AG04450 (cell line): ENCODE measurements at regions of chr5 and their contacts with region 1.

Region 1: GRCh38 chr5:88690409-88691229 is 192.4 kb downstream of the MEF2C start:
- DNase-seq: peak; percentile 18
- H3K4me3 ChIP-seq: peak overlapping the region; percentile 22; the same call in 1 of the 2 replicates
- H3K27ac ChIP-seq: no peak overlapping the region
- H3K27me3 ChIP-seq: peaks cover 100% of the 10 kb centered on the region
- CTCF ChIP-seq: peak; percentile 99

Region 2: DNA sequence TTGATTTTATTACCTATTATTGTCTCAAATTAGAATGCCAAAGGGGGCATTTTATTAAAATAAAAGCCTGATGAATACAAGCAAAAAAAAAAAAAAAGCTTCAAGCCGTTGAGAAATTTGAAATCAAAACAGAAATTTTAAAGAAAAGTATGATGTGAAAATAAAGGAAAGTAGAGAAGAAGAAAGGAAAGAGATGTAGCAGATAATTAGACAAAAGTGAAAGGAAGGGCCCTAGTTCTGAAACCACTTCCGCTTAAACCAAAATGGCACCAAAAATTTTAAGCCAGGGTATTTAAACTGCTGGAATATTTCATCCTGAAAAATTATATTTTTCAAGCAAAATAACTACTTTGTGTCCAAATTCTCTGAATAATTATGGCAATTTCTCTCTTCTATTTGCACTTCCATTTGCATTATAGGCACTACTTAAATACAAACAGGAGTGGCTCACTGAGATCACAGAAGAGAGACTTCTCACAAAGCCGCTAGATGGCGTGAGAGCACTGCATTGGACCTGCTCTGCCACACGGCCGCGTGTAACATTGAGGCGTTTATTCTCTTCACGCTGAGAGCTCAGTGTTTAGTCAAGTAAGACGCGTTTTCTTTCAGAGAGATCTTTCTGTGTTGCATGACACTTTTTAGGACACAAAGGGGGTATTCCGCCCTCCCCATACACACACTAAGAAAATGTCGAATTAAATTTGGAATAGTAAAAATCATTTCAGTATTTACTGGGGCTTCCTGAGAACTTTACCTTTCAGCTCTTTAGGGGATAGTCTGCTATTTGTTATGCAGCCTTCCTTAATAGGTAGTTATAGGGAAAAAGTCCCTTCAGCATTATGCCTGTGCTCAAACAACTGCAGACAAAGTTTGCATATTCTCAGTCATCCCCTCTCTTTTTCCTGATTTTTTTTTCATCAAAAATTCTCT is 909.5 kb before region 1 on chr5:
- CTCF ChIA-PET with region 1: interaction called, 141 read pairs
- POLR2A ChIA-PET with region 1: no interaction called
- DNase-seq: peak; percentile 61
- H3K4me3 ChIP-seq: no peak overlapping the region
- H3K27ac ChIP-seq: no peak overlapping the region
- H3K27me3 ChIP-seq: no peaks in the 10 kb centered on the region
- CTCF ChIP-seq: peak; percentile 97

Region 3: GRCh38 chr5:88666761-88667495 is 23.7 kb before region 1 on chr5:
- CTCF ChIA-PET with region 1: interaction called, 12 read pairs
- POLR2A ChIA-PET with region 1: no interaction called
- DNase-seq: no peak
- H3K4me3 ChIP-seq: peak overlapping the region; percentile 53
- H3K27ac ChIP-seq: no peak overlapping the region
- H3K27me3 ChIP-seq: peaks cover 70% of the 10 kb centered on the region
- CTCF ChIP-seq: no peak

Region 4: DNA sequence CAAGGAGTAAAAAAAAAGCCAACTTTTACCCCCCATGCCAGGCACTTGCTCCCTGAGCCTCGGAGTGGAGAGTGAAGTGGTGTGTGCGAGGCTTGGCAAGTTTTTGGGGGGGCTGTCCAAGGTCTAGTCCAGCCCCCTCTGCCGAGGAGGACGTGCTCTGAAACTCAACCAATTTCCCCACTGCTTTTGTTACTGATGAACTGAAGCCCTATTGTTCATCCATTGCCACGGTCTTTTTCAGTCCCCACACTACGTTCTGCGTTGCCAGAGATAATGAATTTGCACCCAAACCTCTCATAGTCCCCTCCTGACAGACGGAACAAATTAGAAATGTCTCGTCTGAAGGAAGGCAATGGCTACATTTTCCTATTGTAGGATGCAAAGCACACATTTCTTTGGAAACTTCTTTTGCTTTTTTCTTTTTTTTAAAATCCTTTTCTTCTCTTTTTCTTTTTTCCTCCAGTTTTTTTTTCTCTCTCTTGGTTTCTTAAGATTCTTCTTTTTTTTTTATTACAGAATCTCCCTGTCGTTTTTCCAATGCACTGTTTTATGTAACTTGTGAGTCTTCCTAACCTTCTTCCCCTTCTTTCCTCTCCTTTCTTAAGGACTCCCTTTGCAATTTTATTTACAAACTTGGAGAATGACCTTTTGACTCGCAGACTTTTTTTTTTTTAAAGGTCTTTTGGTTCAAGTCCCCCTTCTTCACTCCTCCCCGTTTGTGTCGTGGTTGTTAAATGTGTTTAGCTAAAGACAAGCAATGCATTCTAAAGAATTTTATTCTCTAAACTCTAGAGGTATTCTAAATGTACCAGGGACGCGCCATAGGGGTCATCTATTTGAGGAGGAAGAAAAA is 17.1 kb before region 1 on chr5:
- CTCF ChIA-PET with region 1: interaction called, 13 read pairs
- POLR2A ChIA-PET with region 1: no interaction called
- DNase-seq: no peak
- H3K4me3 ChIP-seq: no peak overlapping the region
- H3K27ac ChIP-seq: no peak overlapping the region
- H3K27me3 ChIP-seq: peaks cover 81% of the 10 kb centered on the region
- CTCF ChIP-seq: no peak

Region 5: DNA sequence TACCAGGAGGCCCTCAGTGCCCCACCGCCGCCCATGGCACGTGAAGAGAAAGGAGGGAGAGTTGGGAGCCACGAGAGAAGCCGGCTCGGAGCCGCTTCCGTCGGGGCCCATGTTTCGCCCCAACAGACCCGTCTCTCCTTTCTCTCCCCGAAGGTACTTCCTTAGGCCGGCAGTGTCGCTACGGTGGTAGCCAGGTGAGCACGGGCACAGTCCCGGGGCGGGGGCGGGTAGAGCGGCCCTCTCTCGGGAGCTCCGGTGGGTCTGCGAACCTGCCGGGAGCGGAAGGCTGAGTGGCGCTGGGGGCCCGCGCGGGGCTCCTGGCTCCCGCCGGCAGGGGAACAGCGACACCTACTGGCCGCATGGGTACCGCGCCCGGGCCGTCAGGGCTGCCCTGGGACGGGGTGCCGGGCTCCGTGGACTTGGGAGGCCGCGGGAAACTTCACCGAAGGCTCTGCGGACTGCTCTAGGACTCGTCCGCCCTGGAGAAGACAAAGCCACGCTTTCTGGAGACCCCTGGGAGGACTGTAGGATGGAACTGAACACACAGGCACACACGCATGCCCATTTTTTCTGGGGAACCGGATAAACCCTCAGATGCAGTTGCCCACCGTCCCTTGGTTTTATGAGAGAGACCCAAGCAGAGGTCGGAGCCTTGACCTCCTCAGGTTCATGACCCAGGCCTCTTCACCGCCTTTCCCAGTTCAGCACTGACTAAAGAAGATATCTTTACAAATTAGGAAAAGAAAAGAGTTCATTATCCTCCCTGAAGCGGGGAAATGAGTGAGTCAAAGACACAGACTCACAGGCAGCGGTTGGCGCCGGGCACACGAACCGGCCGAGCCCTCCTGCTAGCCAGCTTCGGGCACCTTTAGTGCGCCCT is 10.1 kb before region 1 on chr5:
- CTCF ChIA-PET with region 1: interaction called, 45 read pairs
- POLR2A ChIA-PET with region 1: no interaction called
- DNase-seq: no peak
- H3K4me3 ChIP-seq: peak overlapping the region; percentile 47
- H3K27ac ChIP-seq: no peak overlapping the region
- H3K27me3 ChIP-seq: peaks cover 93% of the 10 kb centered on the region
- CTCF ChIP-seq: peak; percentile 89

Region 6: GRCh38 chr5:88724201-88724600 is 33.6 kb after region 1 on chr5:
- CTCF ChIA-PET with region 1: interaction called, 21 read pairs
- POLR2A ChIA-PET with region 1: no interaction called
- DNase-seq: no peak
- H3K4me3 ChIP-seq: no peak overlapping the region
- H3K27ac ChIP-seq: no peak overlapping the region
- H3K27me3 ChIP-seq: no peaks in the 10 kb centered on the region
- CTCF ChIP-seq: peak; percentile 42

Region 7: DNA sequence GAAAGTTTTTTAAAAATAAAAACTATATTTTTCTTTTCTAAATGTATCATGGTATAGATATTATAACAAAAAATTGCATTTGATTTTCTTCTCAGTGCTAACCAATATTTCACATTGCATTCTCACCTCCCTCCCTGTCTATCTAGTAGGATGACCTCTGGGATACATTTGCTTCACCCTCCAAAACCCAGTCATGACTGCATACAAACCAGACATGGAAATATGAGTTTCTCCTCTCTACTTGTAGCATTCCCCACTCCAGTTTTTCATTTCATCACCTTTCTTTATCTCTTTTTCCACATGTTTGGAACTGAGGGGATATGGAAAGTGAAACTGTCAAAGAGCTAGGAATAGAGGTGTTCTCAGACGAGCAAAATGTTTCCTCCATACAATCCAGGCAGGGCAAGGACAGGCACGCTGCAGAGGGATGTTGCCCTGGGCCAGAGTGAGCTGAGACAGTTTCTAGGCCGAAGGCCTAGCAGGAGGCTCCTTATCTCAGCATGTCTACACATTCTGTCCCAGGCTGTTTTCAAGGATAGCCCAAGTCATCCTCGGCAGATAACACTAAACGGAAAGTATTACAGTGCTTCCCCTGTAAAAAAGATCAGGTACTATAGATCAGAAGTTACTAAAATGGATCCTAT is 145.7 kb after region 1 on chr5:
- CTCF ChIA-PET with region 1: interaction called, 16 read pairs
- POLR2A ChIA-PET with region 1: no interaction called
- DNase-seq: no peak
- H3K4me3 ChIP-seq: no peak overlapping the region
- H3K27ac ChIP-seq: no peak overlapping the region
- H3K27me3 ChIP-seq: no peaks in the 10 kb centered on the region
- CTCF ChIP-seq: no peak